Aorta (tissue), 5 donors: ENCODE measurements at regions of chr14 and their contacts with region 1.

Region 1: GRCh38 chr14:31449971-31450610 is 7.2 kb downstream of the DTD2 start:
- DNase-seq: no peak
- ATAC-seq: peak; percentile 81
- H3K4me3 ChIP-seq: no peak overlapping the region
- H3K27ac ChIP-seq: no peak overlapping the region
- H3K4me1 ChIP-seq: no peaks in the 10 kb centered on the region
- H3K27me3 ChIP-seq: no peaks in the 10 kb centered on the region

Region 2: GRCh38 chr14:31243860-31244259 is 206.2 kb before region 1 on chr14:
- intact Hi-C with region 1: no loop called
- DNase-seq: no peak
- ATAC-seq: no peak
- H3K4me3 ChIP-seq: no peak overlapping the region
- H3K27ac ChIP-seq: no peak overlapping the region
- H3K4me1 ChIP-seq: peaks cover 0 to 3% of the 10 kb centered on the region in 2 donors
- H3K27me3 ChIP-seq: no peaks in the 10 kb centered on the region

Region 3: DNA sequence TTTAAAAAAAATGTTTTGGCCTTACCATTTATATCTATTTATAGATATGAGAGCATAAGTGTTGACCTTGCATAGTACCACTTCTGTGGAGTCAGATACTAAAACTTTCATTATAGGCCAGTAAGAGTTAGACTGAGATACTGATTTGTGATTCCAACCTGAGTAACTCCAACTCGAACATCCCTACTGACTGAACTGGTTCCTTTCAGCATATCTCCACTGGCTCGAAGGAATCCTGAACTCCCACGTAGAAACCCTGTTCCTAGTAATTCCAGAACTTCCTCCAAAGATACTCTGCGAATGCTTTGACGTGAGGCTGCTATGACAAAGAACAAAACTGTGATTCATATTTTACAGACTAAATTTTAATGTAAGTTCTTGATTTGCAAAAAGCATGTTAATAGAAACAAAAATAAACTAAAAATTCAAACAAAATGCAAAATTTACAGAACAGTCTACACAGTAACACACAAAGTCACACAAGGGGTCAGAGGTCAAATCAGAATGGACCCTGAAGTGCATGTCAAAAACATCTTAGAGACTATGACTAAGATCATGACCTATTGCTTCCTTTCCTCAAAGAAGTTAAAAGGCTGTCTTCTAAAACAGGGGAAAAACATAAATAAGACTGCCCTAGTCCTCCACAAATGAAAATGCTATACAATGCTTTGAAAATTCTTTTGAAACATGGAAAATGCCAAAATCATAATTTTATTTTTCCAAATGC is 61.2 kb before region 1 on chr14:
- intact Hi-C with region 1: loop called in 1 of 2 experiments (anchors 2 kb)
- DNase-seq: no peak
- ATAC-seq: peak; percentile 69
- H3K4me3 ChIP-seq: no peak overlapping the region
- H3K27ac ChIP-seq: no peak overlapping the region
- H3K4me1 ChIP-seq: no peaks in the 10 kb centered on the region
- H3K27me3 ChIP-seq: no peaks in the 10 kb centered on the region